HEK293T (cell line): ENCODE measurements at regions of chr1 and their contacts with region 1.

Region 1: GRCh38 chr1:6343506-6344405 is 49.8 kb downstream of the ACOT7 start:
- DNase-seq: peak; percentile 80

Region 2: GRCh38 chr1:6401673-6402072 is 57.9 kb after region 1 on chr1:
- CTCF ChIA-PET with region 1: interaction called, 11 read pairs
- POLR2A ChIA-PET with region 1: no interaction called
- DNase-seq: no peak